ENCODE measurements at regions of chr13 and their contacts with region 1.

Region 1: GRCh38 chr13:30802953-30803478 is 67.7 kb downstream of the ALOX5AP start:
- DNase-seq: peak; percentile 77
- H3K4me3 ChIP-seq: peak overlapping the region in 1 of 3 experiments; percentile 40
- H3K27ac ChIP-seq: no peak overlapping the region
- H3K4me1 ChIP-seq: peaks cover 45% of the 10 kb centered on the region
- H3K27me3 ChIP-seq: no peaks in the 10 kb centered on the region
- CTCF ChIP-seq: peak; percentile 76 to 95

Region 2: GRCh38 chr13:30088312-30088855 is 714.6 kb before region 1 on chr13:
- CTCF ChIA-PET with region 1: no interaction called
- dilution Hi-C with region 1: no loop called
- in situ Hi-C with region 1: no loop called
- intact Hi-C with region 1: no loop called
- DNase-seq: no peak
- H3K4me3 ChIP-seq: no peak overlapping the region
- H3K27ac ChIP-seq: no peak overlapping the region
- H3K4me1 ChIP-seq: no peaks in the 10 kb centered on the region
- H3K27me3 ChIP-seq: no peaks in the 10 kb centered on the region
- CTCF ChIP-seq: no peak

Region 3: DNA sequence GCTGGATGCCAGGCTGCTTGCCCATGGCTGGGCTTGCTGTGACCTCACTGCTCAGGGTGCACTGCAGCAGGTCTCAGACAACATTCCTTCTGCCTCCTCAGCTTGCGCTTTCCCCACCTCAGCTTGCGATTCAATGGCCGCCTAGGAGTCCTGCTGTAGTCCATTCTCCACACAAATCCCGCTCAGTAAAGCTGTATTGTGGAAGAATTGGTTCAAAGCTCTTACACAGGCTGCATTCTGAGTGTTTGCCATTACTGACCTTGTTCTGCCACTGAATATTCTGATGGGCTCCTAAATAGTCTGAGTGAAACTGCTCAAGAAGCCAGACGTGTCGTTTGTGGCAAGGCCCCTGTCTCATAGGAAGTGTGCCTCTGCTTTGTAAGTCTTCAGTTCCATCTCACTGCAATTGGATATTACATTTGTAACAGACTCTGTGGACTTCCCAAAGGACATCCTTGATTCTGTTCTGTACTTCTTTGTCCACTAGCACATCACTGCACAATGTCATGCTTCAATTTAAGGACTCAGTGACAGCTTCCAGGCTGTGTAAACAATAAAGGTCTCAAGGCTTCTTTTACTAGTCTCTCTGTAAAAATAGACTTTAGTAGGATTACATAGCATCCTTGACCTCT is 545.4 kb before region 1 on chr13:
- CTCF ChIA-PET with region 1: no interaction called
- dilution Hi-C with region 1: no loop called
- in situ Hi-C with region 1: no loop called
- intact Hi-C with region 1: loop called (anchors 10 kb)
- DNase-seq: no peak
- H3K4me3 ChIP-seq: no peak overlapping the region
- H3K27ac ChIP-seq: no peak overlapping the region
- H3K4me1 ChIP-seq: no peaks in the 10 kb centered on the region
- H3K27me3 ChIP-seq: no peaks in the 10 kb centered on the region
- CTCF ChIP-seq: no peak

Region 4: DNA sequence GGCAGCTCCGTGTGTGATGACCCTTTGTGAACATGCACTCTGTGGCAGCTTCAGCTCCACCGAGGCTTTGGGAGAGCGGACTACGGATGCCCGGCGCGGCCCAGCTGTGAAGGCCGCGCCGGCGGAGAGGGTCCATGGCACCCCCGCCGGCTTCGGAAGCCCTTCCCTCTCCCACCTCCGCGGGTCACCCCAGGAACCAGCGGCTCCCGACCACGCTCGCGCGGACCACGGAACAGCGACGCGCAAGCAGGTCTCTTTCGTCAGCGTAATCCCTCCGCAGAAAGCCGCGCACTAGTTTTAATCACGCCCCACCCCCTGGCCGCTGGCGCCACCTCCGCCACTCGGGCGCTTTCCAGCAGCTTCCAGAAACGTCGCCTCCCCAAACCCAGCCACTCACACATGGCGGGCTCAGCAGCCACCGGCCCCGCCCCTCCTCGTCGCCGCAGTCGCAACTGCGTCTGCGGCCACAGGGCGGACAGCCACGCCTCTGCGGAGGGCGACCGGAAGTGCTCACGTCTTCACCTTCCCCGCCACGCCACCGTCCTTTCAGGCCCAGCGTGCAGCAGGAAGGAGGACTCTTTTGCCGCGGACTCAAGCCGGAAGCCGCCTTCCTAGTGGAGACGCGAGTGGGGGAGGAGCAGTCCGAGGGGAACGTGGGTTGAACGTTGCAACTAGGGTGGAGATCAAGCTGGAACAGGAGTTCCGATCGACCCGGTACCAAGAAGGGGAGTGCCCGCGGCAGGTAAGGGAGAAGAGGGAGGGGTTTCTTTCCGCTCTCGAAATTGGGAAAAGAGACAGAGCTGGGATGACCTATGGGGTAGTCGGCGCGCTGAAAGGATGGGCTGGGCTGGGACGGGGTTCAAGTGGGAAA is 185.5 kb before region 1 on chr13 and contains the start of gene USPL1:
- CTCF ChIA-PET with region 1: interaction called, 8 read pairs
- dilution Hi-C with region 1: no loop called
- in situ Hi-C with region 1: no loop called
- intact Hi-C with region 1: loop called (anchors 1 kb)
- DNase-seq: peak; percentile 99
- H3K4me3 ChIP-seq: peak within 1 kb of the TSS; percentile 71 to 78 (median 75)
- H3K27ac ChIP-seq: peak within 1 kb of the TSS; percentile 96
- H3K4me1 ChIP-seq: peaks cover 3% of the 10 kb centered on the region
- H3K27me3 ChIP-seq: no peaks in the 10 kb centered on the region
- CTCF ChIP-seq: peak in 1 of 2 donors; percentile 20
- total RNA-seq, gene USPL1: 12.4 to 13.5 TPM

Region 5: GRCh38 chr13:30679483-30680330 is 123.3 kb before region 1 on chr13:
- CTCF ChIA-PET with region 1: no interaction called
- dilution Hi-C with region 1: loop called (anchors 10 kb)
- in situ Hi-C with region 1: loop called (anchors 5 kb)
- intact Hi-C with region 1: loop called (anchors 1 kb)
- DNase-seq: no peak
- H3K4me3 ChIP-seq: no peak overlapping the region
- H3K27ac ChIP-seq: no peak overlapping the region
- H3K4me1 ChIP-seq: no peaks in the 10 kb centered on the region
- H3K27me3 ChIP-seq: no peaks in the 10 kb centered on the region
- CTCF ChIP-seq: peak; percentile 47 to 78

Region 6: DNA sequence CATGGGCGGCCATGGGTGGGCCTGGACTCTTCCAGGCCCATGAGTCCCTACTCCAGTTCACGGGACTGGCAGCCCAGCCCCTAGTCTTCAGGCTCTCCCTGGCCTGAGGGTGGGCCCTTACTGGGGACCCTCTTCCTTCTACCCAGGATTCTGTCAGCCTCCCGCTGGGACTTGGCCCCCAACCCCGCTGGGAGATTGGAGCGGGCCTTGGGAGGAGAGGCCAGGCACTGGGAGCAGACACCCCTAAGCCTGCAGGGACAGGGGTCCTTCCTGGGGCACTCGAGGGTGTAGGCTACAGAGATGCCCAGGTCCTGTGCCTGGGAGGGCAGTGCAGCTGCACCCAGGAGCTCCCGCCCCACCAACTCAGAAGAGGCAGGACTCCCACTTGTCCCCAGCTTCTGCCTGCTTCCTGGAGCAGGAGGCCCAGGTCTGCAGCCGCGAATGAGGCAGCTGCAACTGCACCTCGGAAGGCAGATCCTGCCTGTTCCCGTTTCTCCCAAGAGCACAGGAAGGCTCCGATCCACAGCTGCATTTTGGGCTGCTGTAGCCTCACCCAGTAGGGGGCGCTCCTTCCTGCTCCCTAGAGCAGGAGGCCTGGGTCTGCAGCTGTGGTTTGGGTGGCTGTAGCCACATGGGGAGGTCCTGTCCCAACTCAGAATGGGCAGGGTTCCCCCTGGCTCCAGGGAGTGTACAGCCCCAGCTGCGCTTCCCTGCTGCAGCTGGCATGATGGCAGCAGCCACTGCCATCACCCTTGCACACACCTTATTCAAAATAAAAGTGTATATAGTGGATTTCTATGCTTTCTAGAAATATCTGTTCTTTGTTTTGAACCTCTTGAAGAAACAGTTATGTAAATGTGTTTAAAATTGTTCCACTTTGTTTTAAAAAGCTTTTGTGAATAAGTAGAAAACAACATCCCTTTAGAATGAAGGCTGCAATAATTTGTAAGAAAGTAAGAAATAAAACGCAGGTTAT is 176.3 kb after region 1 on chr13:
- CTCF ChIA-PET with region 1: no interaction called
- dilution Hi-C with region 1: no loop called
- in situ Hi-C with region 1: no loop called
- intact Hi-C with region 1: loop called (anchors 2 kb)
- DNase-seq: no peak
- H3K4me3 ChIP-seq: no peak overlapping the region
- H3K27ac ChIP-seq: no peak overlapping the region
- H3K4me1 ChIP-seq: peaks cover 20% of the 10 kb centered on the region
- H3K27me3 ChIP-seq: no peaks in the 10 kb centered on the region
- CTCF ChIP-seq: peak; percentile 38 to 86

Region 7: GRCh38 chr13:31044377-31045285 is 241.6 kb after region 1 on chr13:
- CTCF ChIA-PET with region 1: no interaction called
- dilution Hi-C with region 1: no loop called
- in situ Hi-C with region 1: loop called in 1 of 2 experiments (anchors 10 kb)
- intact Hi-C with region 1: loop called (anchors 1 kb)
- DNase-seq: peak; percentile 72
- H3K4me3 ChIP-seq: no peak overlapping the region
- H3K27ac ChIP-seq: peak overlapping the region; percentile 74
- H3K4me1 ChIP-seq: peaks cover 32% of the 10 kb centered on the region
- H3K27me3 ChIP-seq: no peaks in the 10 kb centered on the region
- CTCF ChIP-seq: peak; percentile 97 to 98

Measured in mammary epithelial cell (primary cell).